ENCODE measurements at regions of chr3 and their contacts with region 1.

Region 1: DNA sequence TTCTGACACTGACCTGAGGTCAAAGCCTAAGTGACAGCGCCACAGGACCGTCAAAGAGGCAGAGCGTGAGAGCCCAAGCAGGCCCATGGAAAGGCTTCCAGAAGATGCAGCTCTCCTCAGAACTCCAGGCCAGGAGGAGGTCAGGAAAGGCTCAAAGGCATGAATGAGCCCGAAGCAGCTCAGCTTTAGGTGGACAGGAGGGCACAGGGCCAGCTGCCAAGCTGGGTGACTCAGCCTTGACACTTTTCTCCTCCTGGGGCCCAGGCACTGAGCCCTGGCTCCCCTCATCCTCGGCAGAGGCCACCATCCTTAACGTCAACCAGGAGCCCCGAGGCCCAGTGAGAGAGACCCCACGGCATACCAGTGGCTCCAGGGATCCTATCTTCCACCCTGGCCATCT is 62.9 kb downstream of the ADCY5 start:
- DNase-seq: peak; percentile 59 to 69
- ATAC-seq: peak; percentile 24 to 71 (median 48)
- H3K4me3 ChIP-seq: peak overlapping the region in 5 of 10 donors; percentile 5 to 37 (median 24)
- H3K27ac ChIP-seq: peak overlapping the region; percentile 66 to 94 (median 87)
- H3K4me1 ChIP-seq: peaks cover 19 to 99% (median 87%) of the 10 kb centered on the region in 9 donors
- H3K27me3 ChIP-seq: no peaks in the 10 kb centered on the region
- CTCF ChIP-seq: no peak

Region 2: GRCh38 chr3:123328851-123329635 is 56.9 kb before region 1 on chr3:
- intact Hi-C with region 1: loop called in 1 of 10 experiments (anchors 5 kb)
- DNase-seq: peak; percentile 80 to 84
- ATAC-seq: peak; percentile 39 to 66 (median 58)
- H3K4me3 ChIP-seq: no peak overlapping the region
- H3K27ac ChIP-seq: peak overlapping the region in 8 of 10 donors; percentile 72 to 96 (median 92)
- H3K4me1 ChIP-seq: peaks cover 15 to 91% (median 52%) of the 10 kb centered on the region in 9 donors
- H3K27me3 ChIP-seq: no peaks in the 10 kb centered on the region
- CTCF ChIP-seq: peak; percentile 87 to 97 (median 93)

Region 3: GRCh38 chr3:123335007-123335670 is 50.8 kb before region 1 on chr3:
- intact Hi-C with region 1: loop called in 2 of 10 experiments (anchors 5 kb)
- DNase-seq: no peak
- ATAC-seq: peak in 6 of 8 donors; percentile 4 to 41 (median 19)
- H3K4me3 ChIP-seq: peak overlapping the region in 7 of 10 donors; percentile 17 to 38 (median 22)
- H3K27ac ChIP-seq: peak overlapping the region; percentile 32 to 96 (median 88)
- H3K4me1 ChIP-seq: peaks cover 15 to 93% (median 65%) of the 10 kb centered on the region in 9 donors
- H3K27me3 ChIP-seq: no peaks in the 10 kb centered on the region
- CTCF ChIP-seq: no peak

Region 4: DNA sequence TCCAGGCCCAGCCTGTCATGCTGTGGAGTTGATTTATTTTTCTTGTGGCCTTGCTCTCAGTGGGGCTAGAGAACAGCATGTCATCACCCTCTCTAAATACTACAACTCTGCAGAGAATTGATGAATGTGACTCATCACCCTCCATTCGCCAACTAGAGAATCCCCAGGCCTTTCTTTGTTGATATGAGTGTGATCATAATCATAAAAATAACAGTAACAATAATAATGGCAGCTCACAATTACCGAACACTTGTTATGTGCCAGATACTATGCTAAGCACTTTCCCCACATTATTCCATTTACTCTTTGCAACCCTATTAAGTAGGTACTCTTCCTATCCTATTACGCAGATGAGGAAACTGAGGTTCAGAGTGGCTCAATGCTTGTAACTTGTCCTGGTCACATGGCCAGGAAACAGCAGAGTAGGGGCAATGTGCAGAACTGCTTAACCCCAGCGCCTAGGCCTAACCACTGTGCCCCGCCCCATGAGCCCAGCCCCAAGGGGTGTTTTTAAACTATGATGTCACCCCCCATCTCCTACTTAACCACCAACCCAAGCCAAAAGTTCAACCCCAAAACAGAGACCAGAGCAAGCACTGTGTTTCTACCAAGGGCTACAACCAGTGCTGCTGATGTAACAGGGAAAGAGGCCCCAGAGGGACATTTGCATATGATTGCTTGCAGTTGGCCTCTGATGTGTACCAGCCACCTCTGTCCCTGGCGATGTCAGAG is 41.6 kb before region 1 on chr3:
- intact Hi-C with region 1: loop called in 2 of 10 experiments (anchors 5 kb)
- DNase-seq: no peak
- ATAC-seq: peak in 5 of 8 donors; percentile 10 to 32 (median 22)
- H3K4me3 ChIP-seq: no peak overlapping the region
- H3K27ac ChIP-seq: peak overlapping the region; percentile 31 to 96 (median 77)
- H3K4me1 ChIP-seq: peaks cover 28 to 99% (median 77%) of the 10 kb centered on the region in 9 donors
- H3K27me3 ChIP-seq: peaks cover 0 to 4% (median 0%) of the 10 kb centered on the region in 7 donors
- CTCF ChIP-seq: no peak

Region 5: GRCh38 chr3:123444023-123444422 is 58.0 kb after region 1 on chr3:
- intact Hi-C with region 1: loop called in 2 of 10 experiments (anchors 5 kb)
- DNase-seq: peak in 1 of 2 donors; percentile 48
- ATAC-seq: peak in 4 of 8 donors; percentile 56 to 61 (median 59)
- H3K4me3 ChIP-seq: peak overlapping the region in 9 of 10 donors; percentile 50 to 81 (median 72)
- H3K27ac ChIP-seq: peak overlapping the region in 6 of 10 donors; percentile 68 to 95 (median 88)
- H3K4me1 ChIP-seq: peaks cover 7 to 69% (median 30%) of the 10 kb centered on the region in 9 donors
- H3K27me3 ChIP-seq: peaks cover 0 to 48% (median 16%) of the 10 kb centered on the region in 7 donors
- CTCF ChIP-seq: peak in 3 of 9 donors; percentile 23 to 26 (median 24)